Gastrocnemius medialis (tissue), 4 donors: ENCODE measurements at regions of chr9 and their contacts with region 1.

Region 1: DNA sequence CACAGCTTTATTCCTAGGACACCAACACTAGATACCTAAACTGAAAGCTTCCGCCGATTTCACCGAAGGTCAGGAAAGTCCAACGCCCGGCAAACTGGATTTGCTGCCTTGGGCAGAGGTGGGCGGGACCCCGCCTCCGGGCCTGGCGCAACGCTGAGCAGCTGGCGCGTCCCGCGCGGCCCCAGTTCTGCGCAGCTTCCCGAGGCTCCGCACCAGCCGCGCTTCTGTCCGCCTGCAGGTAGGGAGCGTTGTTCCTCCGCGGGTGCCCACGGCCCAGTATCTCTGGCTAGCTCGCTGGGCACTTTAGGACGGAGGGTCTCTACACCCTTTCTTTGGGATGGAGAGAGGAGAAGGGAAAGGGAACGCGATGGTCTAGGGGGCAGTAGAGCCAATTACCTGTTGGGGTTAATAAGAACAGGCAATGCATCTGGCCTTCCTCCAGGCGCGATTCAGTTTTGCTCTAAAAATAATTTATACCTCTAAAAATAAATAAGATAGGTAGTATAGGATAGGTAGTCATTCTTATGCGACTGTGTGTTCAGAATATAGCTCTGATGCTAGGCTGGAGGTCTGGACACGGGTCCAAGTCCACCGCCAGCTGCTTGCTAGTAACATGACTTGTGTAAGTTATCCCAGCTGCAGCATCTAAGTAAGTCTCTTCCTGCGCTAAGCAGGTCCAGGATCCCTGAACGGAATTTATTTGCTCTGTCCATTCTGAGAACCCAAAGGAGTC is at the start of gene CD274:
- DNase-seq: peak; percentile 74 to 91
- ATAC-seq: peak; percentile 86 to 92
- H3K4me3 ChIP-seq: peak within 1 kb of the TSS; percentile 60 to 82 (median 66)
- H3K27ac ChIP-seq: peak within 1 kb of the TSS; percentile 71 to 90 (median 80)
- H3K4me1 ChIP-seq: peaks cover 22 to 27% of the 10 kb centered on the region in 2 donors
- H3K27me3 ChIP-seq: no peaks in the 10 kb centered on the region
- CTCF ChIP-seq: peak; percentile 73 to 91 (median 88)
- POLR2A ChIP-seq: peak; percentile 40 to 50
- total RNA-seq, gene CD274: 0.61 to 7.2 (median 1.6) TPM

Region 2: GRCh38 chr9:5510360-5510931 is 59.9 kb after region 1 on chr9 and contains the start of gene PDCD1LG2:
- in situ Hi-C with region 1: loop called in 1 of 4 experiments (anchors 10 kb)
- intact Hi-C with region 1: no loop called
- DNase-seq: no peak
- ATAC-seq: peak; percentile 37 to 64
- H3K4me3 ChIP-seq: peak within 1 kb of the TSS; percentile 37 to 41 (median 40)
- H3K27ac ChIP-seq: peak within 1 kb of the TSS; percentile 55 to 74 (median 66)
- H3K4me1 ChIP-seq: peaks cover 18 to 27% of the 10 kb centered on the region in 2 donors
- H3K27me3 ChIP-seq: no peaks in the 10 kb centered on the region
- CTCF ChIP-seq: no peak
- POLR2A ChIP-seq: peak in 1 of 2 donors; percentile 20
- total RNA-seq, gene PDCD1LG2: 1.4 to 2.5 (median 1.7) TPM

Region 3: DNA sequence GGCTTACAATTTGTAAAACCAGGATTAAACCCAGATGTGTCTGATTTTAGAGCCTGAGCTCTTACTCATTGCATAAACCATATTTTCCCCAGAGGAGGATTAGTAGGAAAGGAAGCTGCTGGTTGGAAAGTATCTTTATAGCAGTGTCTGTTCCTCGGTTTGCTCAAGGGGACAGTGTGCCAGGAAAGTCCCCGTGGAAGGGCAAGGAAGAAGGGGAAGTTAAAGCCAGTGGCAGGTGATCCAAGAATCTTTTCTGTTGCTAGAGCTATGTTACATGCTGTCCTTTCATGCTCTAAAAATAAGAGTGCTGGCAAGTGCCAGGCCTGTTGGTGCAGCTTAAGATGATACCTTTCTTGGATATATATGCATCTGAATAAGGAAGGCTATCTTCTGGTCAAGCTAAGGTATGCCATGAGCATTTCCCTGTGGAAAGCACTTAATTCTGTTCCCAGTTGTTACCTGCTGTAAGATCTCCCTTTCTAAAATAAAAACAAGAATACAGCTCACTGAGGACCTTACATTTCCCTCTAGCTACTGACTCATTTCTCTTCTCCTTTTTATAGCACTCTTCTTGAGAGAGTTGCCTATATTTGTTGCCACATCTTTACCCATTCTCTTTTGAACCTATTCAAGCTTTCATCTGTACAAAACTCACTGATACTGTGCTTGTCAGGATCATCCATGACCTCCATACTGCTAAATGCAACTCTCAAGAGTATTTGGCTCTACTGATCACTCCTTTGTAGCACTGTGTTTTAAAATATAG is 67.8 kb after region 1 on chr9:
- in situ Hi-C with region 1: loop called in 1 of 4 experiments (anchors 10 kb)
- intact Hi-C with region 1: loop called (anchors 2 kb)
- DNase-seq: peak; percentile 79 to 89
- ATAC-seq: peak; percentile 95 to 99
- H3K4me3 ChIP-seq: no peak overlapping the region
- H3K27ac ChIP-seq: peak overlapping the region; percentile 81 to 89 (median 84)
- H3K4me1 ChIP-seq: peaks cover 49 to 52% of the 10 kb centered on the region in 2 donors
- H3K27me3 ChIP-seq: no peaks in the 10 kb centered on the region
- CTCF ChIP-seq: no peak
- POLR2A ChIP-seq: no peak

Region 4: DNA sequence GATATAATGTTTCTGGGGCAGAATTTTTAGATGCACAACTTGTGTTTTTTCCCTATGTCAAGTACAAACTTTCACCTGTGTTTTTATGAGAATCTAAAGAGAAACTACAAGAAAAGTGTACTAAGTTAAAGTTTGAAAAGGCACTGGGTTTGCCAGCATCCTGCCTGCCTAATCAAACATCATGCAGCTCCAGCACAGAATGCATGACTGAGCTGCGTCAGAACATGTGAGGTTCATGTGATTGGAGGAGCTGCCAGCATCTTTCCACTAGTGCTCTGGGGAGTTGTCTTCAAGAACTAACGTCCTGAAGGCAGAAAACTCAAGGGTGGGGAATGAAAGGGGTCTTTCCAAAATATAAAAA is 132.3 kb after region 1 on chr9:
- in situ Hi-C with region 1: loop called in 1 of 4 experiments (anchors 5 kb)
- intact Hi-C with region 1: no loop called
- DNase-seq: peak; percentile 30 to 31
- ATAC-seq: peak; percentile 40 to 54
- H3K4me3 ChIP-seq: no peak overlapping the region
- H3K27ac ChIP-seq: no peak overlapping the region
- H3K4me1 ChIP-seq: peaks cover 10 to 12% of the 10 kb centered on the region in 2 donors
- H3K27me3 ChIP-seq: no peaks in the 10 kb centered on the region
- CTCF ChIP-seq: no peak
- POLR2A ChIP-seq: no peak

Region 5: DNA sequence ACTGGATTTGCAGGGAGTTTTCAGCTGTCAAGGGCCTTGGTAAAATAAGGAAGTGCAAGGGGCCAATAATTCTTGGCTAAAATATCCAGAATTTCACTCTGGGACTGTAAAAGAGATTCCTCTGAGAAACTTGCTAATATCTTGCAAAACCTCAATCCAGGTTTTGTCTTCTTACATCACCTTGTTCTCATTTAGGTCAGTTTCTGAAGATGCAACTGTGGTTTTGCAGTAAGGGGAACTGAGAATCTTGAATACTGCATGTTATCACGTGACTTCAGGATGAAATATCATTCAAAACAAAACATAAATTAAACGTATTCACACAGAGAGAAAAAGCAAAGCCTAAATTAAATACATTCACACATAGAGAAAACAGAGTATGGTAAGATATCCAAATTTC is 143.4 kb after region 1 on chr9:
- in situ Hi-C with region 1: loop called in 3 of 4 experiments (anchors 5 to 10 kb)
- intact Hi-C with region 1: loop called (anchors 1 kb)
- DNase-seq: no peak
- ATAC-seq: no peak
- H3K4me3 ChIP-seq: no peak overlapping the region
- H3K27ac ChIP-seq: no peak overlapping the region
- H3K4me1 ChIP-seq: peaks cover 0 to 5% of the 10 kb centered on the region in 2 donors
- H3K27me3 ChIP-seq: no peaks in the 10 kb centered on the region
- CTCF ChIP-seq: no peak
- POLR2A ChIP-seq: no peak

Region 6: GRCh38 chr9:5832543-5833529 is 382.3 kb after region 1 on chr9 and contains the start of gene ERMP1:
- in situ Hi-C with region 1: no loop called
- intact Hi-C with region 1: loop called (anchors 5 kb)
- DNase-seq: peak; percentile 65 to 84
- ATAC-seq: peak; percentile 74 to 91
- H3K4me3 ChIP-seq: peak within 1 kb of the TSS; percentile 63 to 98 (median 69)
- H3K27ac ChIP-seq: peak within 1 kb of the TSS; percentile 66 to 93 (median 87)
- H3K4me1 ChIP-seq: peaks cover 16 to 24% of the 10 kb centered on the region in 2 donors
- H3K27me3 ChIP-seq: no peaks in the 10 kb centered on the region
- CTCF ChIP-seq: peak; percentile 76 to 87 (median 81)
- POLR2A ChIP-seq: peak; percentile 54 to 71
- total RNA-seq, gene ERMP1: 4.4 to 7.4 (median 6.3) TPM